WTC11 (cell line): ENCODE measurements at regions of chr5 and their contacts with region 1.

Region 1: DNA sequence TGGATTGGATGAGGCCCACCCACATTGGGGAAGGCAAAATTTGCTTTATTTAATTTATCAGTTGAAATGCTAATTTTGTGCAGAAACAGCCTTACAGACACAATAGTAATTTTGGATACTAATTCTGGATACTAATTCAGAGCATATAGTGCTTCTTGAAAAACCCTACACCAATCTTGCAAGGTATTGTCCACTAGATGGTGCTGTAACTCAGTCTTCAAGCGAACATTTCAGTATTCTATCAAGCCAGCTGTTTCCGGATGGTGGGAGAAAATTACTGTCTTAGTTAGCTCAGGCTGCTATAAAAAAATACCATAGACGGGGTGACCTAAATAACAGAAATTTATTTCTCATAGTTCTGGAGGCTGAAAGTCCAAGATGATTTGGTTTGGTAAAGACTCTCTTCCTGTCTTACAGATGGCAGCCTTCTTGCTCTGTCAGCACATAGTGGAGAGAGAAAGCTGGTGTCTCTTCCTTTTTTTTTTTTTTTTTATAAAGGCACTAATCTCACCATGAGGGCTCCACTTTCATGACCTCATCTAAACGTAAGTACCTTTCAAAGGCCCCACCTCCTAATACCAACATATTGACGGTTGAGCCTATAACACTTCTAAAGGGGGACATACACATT is 1306.5 kb upstream of the CDH9 start:
- DNase-seq: no peak
- ATAC-seq: peak; percentile 79
- H3K4me3 Mint-ChIP-seq: no peak overlapping the region
- H3K27ac Mint-ChIP-seq: no peak overlapping the region
- H3K4me1 Mint-ChIP-seq: no peaks in the 10 kb centered on the region
- H3K27me3 Mint-ChIP-seq: no peaks in the 10 kb centered on the region; the same call in 1 of the 2 replicates
- CTCF ChIP-seq: peak; percentile 36

Region 2: GRCh38 chr5:28473531-28474107 is 128.7 kb after region 1 on chr5:
- CTCF ChIA-PET with region 1: interaction called, 10 read pairs
- POLR2A ChIA-PET with region 1: no interaction called
- DNase-seq: no peak
- ATAC-seq: peak; percentile 72
- H3K4me3 Mint-ChIP-seq: no peak overlapping the region
- H3K27ac Mint-ChIP-seq: no peak overlapping the region
- H3K4me1 Mint-ChIP-seq: no peaks in the 10 kb centered on the region
- H3K27me3 Mint-ChIP-seq: no peaks in the 10 kb centered on the region
- CTCF ChIP-seq: no peak

Region 3: DNA sequence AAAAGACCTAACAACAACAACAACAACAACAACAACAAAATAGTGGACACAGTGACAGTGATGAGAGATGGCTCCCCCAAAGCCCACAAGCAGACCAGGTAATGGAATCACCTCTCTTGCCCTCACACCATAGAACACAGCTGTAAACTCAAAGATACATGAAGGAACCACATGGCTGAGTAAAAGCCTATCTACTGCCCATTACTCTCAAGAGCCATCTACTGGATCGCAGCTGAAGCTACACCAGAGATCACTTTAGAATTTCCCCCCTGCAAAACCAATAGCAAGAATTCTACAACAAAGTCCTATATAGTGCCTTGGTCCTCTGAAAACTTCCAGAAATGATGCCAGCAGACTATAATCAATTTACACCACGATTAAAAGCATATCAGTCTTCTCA is 231.1 kb after region 1 on chr5:
- CTCF ChIA-PET with region 1: interaction called, 15 read pairs
- POLR2A ChIA-PET with region 1: no interaction called
- DNase-seq: no peak
- ATAC-seq: peak; percentile 98
- H3K4me3 Mint-ChIP-seq: no peak overlapping the region
- H3K27ac Mint-ChIP-seq: no peak overlapping the region
- H3K4me1 Mint-ChIP-seq: no peaks in the 10 kb centered on the region
- H3K27me3 Mint-ChIP-seq: no peaks in the 10 kb centered on the region; the same call in 1 of the 2 replicates
- CTCF ChIP-seq: no peak